ENCODE measurements at regions of chr1 and their contacts with region 1.

Region 1: GRCh38 chr1:17001760-17002523 is 9.8 kb downstream of the ATP13A2 start:
- DNase-seq: no peak
- ATAC-seq: no peak
- H3K4me3 ChIP-seq: no peak overlapping the region
- H3K4me3 Mint-ChIP-seq: no peak overlapping the region
- H3K27ac ChIP-seq: no peak overlapping the region
- H3K27ac Mint-ChIP-seq: no peak overlapping the region
- H3K4me1 ChIP-seq: no peaks in the 10 kb centered on the region
- H3K4me1 Mint-ChIP-seq: peaks cover 0 to 1% (median 0%) of the 10 kb centered on the region in 7 donors
- H3K27me3 ChIP-seq: no peaks in the 10 kb centered on the region
- H3K27me3 Mint-ChIP-seq: no peaks in the 10 kb centered on the region

Region 2: GRCh38 chr1:16938351-16939321 is 63.3 kb before region 1 on chr1:
- CTCF ChIA-PET with region 1: no interaction called
- POLR2A ChIA-PET with region 1: interaction called, 11 read pairs
- intact Hi-C with region 1: no loop called
- DNase-seq: no peak
- ATAC-seq: peak; percentile 11
- H3K4me3 ChIP-seq: no peak overlapping the region
- H3K4me3 Mint-ChIP-seq: no peak overlapping the region
- H3K27ac ChIP-seq: no peak overlapping the region
- H3K27ac Mint-ChIP-seq: peak overlapping the region in 1 of 9 donors; percentile 63
- H3K4me1 ChIP-seq: no peaks in the 10 kb centered on the region
- H3K4me1 Mint-ChIP-seq: peaks cover 0 to 5% (median 0%) of the 10 kb centered on the region in 7 donors
- H3K27me3 ChIP-seq: no peaks in the 10 kb centered on the region
- H3K27me3 Mint-ChIP-seq: no peaks in the 10 kb centered on the region

Region 3: DNA sequence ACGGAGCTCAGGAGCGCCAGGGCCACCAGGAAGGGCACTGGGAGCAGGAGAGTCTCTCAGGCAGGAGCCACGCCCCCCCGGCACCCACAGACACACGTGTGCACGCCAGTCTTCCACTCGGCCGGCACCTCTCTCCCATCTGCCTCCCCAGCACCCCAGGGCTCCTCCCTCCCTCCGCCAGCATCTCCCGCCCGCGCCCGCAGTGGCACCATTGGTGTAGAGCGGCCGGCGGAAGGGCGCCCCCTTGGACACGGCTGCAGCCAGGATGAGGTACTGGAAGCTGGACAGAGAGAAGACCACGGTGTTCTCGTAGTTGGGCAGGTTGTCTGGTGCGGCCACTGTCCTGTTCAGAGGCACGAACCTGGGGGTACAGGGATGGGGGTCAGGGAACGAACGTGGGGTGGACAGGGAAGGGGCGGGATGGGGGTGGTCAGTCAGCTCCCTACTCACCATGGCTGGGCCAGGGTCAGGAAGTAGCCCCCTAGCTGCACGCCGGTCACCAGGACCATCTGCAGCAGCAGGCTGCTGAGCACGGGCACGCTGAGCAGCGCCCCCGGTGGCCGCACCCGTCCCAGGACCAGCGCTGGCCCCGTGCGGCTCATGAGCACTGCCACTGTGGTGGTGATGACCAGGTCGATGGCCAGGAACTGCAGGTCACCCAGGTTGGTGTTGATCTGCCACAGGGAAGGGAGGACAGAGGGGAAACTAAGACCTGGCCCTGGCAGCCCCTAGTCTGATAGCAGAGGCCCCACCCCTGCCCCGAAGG is 15.2 kb before region 1 on chr1:
- CTCF ChIA-PET with region 1: no interaction called
- POLR2A ChIA-PET with region 1: no interaction called
- intact Hi-C with region 1: no loop called
- DNase-seq: no peak
- ATAC-seq: no peak
- H3K4me3 ChIP-seq: no peak overlapping the region
- H3K4me3 Mint-ChIP-seq: no peak overlapping the region
- H3K27ac ChIP-seq: no peak overlapping the region
- H3K27ac Mint-ChIP-seq: no peak overlapping the region
- H3K4me1 ChIP-seq: no peaks in the 10 kb centered on the region
- H3K4me1 Mint-ChIP-seq: no peaks in the 10 kb centered on the region
- H3K27me3 ChIP-seq: no peaks in the 10 kb centered on the region
- H3K27me3 Mint-ChIP-seq: peaks cover 8 to 16% (median 10%) of the 10 kb centered on the region in 5 donors

Measured in naive thymus-derived CD4-positive, alpha-beta T cell (primary cell).